ENCODE measurements at regions of chr6 and their contacts with region 1.

Region 1: DNA sequence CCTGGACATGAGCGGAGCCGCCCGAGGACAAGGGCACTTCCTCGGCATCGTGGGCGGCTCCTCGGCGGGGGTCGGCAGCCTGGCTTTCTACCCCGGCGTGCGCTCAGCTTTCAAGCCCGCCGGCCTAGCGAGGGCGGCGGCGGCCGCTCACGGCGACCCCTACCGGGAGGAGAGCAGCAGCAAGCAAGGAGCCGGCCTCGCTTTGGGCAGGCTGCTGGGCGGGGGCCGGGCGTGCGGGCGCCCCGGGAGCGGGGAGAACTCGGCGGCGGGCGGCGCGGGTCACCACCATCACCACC is 6.7 kb downstream of the PRDM13 start:
- DNase-seq: peak; percentile 74
- ATAC-seq: peak; percentile 71
- H3K4me3 Mint-ChIP-seq: peak overlapping the region; percentile 60
- H3K27ac Mint-ChIP-seq: no peak overlapping the region
- H3K4me1 Mint-ChIP-seq: peaks cover 34% of the 10 kb centered on the region
- H3K27me3 Mint-ChIP-seq: peaks cover 68% of the 10 kb centered on the region

Region 2: DNA sequence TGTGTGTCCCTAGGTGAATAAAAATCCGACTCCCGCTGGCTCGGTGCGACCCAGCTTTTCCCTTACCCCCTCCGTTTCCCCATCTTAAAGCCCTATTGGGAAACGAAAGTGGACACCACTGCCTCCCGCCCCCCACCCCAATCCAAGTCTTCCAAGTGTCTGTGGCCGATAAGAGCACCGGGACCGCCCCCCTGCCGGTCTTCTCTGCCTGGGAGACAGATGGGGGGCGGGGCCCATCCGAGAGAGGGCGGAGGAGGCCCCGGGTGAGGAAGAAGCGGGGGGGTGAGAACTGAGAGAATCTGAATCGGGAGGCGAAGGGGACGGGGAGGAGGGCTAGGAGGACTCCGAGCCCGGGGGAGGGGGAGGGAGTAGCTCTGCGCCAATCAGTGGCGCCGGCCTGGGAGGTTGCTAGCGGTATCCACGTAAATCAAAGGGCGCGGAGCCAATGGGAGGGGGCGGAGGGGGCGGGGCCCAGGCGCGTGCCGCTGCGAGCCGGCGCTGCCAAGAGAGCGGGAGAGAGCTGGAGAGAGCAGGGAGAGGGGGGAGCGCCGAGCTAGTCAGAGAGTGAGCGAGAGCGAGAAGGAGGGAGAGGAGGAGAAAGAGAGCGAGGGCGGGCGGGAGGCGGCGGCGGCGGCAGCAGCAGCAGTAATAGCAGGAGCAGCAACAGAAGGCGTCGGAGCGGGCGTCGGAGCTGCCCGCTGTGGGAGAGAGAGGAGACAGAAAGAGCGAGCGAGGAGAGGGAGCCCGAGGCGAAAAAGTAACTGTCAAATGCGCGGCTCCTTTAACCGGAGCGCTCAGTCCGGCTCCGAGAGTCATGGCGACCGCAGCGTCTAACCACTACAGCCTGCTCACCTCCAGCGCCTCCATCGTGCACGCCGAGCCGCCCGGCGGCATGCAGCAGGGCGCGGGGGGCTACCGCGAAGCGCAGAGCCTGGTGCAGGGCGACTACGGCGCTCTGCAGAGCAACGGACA is 779.0 kb before region 1 on chr6 and contains the start of gene POU3F2:
- CTCF ChIA-PET with region 1: no interaction called
- POLR2A ChIA-PET with region 1: no interaction called
- intact Hi-C with region 1: loop called (anchors 5 to 10 kb)
- DNase-seq: peak; percentile 85
- ATAC-seq: peak; percentile 85
- H3K4me3 Mint-ChIP-seq: peak within 1 kb of the TSS; percentile 75
- H3K27ac Mint-ChIP-seq: no peak within 1 kb of the TSS
- H3K4me1 Mint-ChIP-seq: peaks cover 43% of the 10 kb centered on the region
- H3K27me3 Mint-ChIP-seq: peaks cover 64% of the 10 kb centered on the region
- total RNA-seq, gene POU3F2: not detected

Region 3: DNA sequence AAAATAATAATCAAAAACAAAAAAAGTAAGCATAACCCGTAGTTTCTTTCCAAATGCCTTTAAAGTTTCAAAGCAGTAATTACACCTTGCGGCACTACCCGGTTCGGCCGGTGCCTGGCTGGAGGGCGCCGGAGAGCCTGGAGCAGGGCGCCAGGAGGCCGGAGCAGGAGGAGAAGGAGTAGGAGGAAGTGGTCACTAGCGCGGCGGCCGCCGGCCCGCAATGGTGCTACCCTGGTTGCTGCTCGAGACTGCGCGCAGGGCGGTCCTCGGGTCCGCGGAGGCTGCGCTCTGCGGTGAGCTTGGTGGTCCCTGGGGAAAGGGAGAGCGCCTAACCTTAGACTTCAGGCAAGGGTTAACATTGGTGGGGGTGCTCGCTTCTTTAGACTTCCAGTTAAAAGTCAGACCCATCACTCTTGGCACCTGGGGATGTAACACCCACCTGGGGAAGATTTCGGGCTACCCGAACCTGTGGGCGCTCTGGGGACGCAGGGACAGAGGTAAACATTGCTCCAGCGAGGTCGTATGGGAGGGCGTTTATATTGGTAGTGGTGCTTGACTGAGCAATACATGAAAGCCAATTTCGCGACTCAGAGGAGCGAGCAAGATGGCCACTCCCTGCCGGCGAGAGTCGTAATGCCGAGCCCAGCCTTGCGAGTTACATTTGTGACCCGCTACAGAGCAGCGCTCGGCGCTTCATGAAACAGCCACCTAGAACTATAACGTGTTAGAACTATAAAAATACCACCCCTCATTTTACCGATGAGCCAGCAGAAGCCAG is 92.3 kb before region 1 on chr6:
- CTCF ChIA-PET with region 1: interaction called, 3 read pairs
- POLR2A ChIA-PET with region 1: no interaction called
- intact Hi-C with region 1: loop called in 1 of 2 experiments (anchors 2 kb)
- DNase-seq: peak; percentile 89
- ATAC-seq: peak; percentile 92
- H3K4me3 Mint-ChIP-seq: peak overlapping the region; percentile 90
- H3K27ac Mint-ChIP-seq: peak overlapping the region; percentile 99
- H3K4me1 Mint-ChIP-seq: peaks cover 17% of the 10 kb centered on the region
- H3K27me3 Mint-ChIP-seq: no peaks in the 10 kb centered on the region

Region 4: GRCh38 chr6:99568103-99568933 is 45.0 kb before region 1 on chr6 and contains the start of gene CCNC:
- CTCF ChIA-PET with region 1: interaction called, 4 read pairs
- POLR2A ChIA-PET with region 1: interaction called, 4 read pairs
- intact Hi-C with region 1: loop called in 1 of 2 experiments (anchors 1 kb)
- DNase-seq: peak; percentile 94
- ATAC-seq: peak; percentile 98
- H3K4me3 Mint-ChIP-seq: peak within 1 kb of the TSS; percentile 97
- H3K27ac Mint-ChIP-seq: peak within 1 kb of the TSS; percentile 98
- H3K4me1 Mint-ChIP-seq: peaks cover 25% of the 10 kb centered on the region
- H3K27me3 Mint-ChIP-seq: no peaks in the 10 kb centered on the region
- total RNA-seq, gene CCNC: 50.7 to 67.3 TPM

Region 5: GRCh38 chr6:99588618-99589289 is 24.6 kb before region 1 on chr6:
- CTCF ChIA-PET with region 1: interaction called, 6 read pairs
- POLR2A ChIA-PET with region 1: no interaction called
- intact Hi-C with region 1: loop called in 1 of 2 experiments (anchors 1 kb)
- DNase-seq: peak; percentile 86
- ATAC-seq: peak; percentile 96
- H3K4me3 Mint-ChIP-seq: peak overlapping the region; percentile 70
- H3K27ac Mint-ChIP-seq: peak overlapping the region; percentile 37
- H3K4me1 Mint-ChIP-seq: peaks cover 17% of the 10 kb centered on the region
- H3K27me3 Mint-ChIP-seq: peaks cover 55% of the 10 kb centered on the region

Region 6: GRCh38 chr6:100446115-100447080 is 833.0 kb after region 1 on chr6:
- CTCF ChIA-PET with region 1: no interaction called
- POLR2A ChIA-PET with region 1: no interaction called
- intact Hi-C with region 1: loop called in 1 of 2 experiments (anchors 5 kb)
- DNase-seq: no peak
- ATAC-seq: no peak
- H3K4me3 Mint-ChIP-seq: no peak overlapping the region
- H3K27ac Mint-ChIP-seq: no peak overlapping the region
- H3K4me1 Mint-ChIP-seq: peaks cover 5% of the 10 kb centered on the region
- H3K27me3 Mint-ChIP-seq: peaks cover 52% of the 10 kb centered on the region

Region 7: GRCh38 chr6:101393251-101393828 is 1780.0 kb after region 1 on chr6 and contains the start of gene GRIK2:
- CTCF ChIA-PET with region 1: no interaction called
- POLR2A ChIA-PET with region 1: no interaction called
- intact Hi-C with region 1: loop called in 1 of 2 experiments (anchors 10 kb)
- DNase-seq: peak; percentile 50
- ATAC-seq: peak; percentile 42
- H3K4me3 Mint-ChIP-seq: no peak within 1 kb of the TSS
- H3K27ac Mint-ChIP-seq: no peak within 1 kb of the TSS
- H3K4me1 Mint-ChIP-seq: no peaks in the 10 kb centered on the region
- H3K27me3 Mint-ChIP-seq: peaks cover 36% of the 10 kb centered on the region
- total RNA-seq, gene GRIK2: not detected